Mammary epithelial cell (primary cell): ENCODE measurements at regions of chr15 and their contacts with region 1.

Region 1: DNA sequence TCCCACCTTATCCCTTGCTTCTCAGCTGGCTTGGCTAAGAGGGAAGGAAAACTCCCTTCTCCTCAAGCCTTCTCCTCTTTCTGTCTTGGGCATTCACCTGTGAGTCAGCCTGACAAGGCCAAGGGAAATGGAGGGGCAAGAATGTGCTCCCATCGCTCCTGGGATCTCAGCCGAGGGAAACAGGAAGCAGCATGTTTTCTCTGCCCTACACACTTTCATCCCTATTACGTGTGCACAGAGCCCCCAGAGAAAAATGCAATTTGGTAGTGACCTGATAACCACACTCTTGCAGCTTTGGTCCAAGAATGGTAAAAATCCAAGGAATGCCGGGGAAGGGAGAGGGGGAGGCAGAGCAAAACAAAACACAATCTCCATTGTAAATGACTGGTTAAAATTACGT is 32.9 kb upstream of the MTMR10 start:
- DNase-seq: peak; percentile 91
- H3K4me3 ChIP-seq: peak overlapping the region in 1 of 3 experiments; percentile 4
- H3K27ac ChIP-seq: peak overlapping the region; percentile 93
- H3K4me1 ChIP-seq: peaks cover 30% of the 10 kb centered on the region
- H3K27me3 ChIP-seq: no peaks in the 10 kb centered on the region
- CTCF ChIP-seq: no peak

Region 2: DNA sequence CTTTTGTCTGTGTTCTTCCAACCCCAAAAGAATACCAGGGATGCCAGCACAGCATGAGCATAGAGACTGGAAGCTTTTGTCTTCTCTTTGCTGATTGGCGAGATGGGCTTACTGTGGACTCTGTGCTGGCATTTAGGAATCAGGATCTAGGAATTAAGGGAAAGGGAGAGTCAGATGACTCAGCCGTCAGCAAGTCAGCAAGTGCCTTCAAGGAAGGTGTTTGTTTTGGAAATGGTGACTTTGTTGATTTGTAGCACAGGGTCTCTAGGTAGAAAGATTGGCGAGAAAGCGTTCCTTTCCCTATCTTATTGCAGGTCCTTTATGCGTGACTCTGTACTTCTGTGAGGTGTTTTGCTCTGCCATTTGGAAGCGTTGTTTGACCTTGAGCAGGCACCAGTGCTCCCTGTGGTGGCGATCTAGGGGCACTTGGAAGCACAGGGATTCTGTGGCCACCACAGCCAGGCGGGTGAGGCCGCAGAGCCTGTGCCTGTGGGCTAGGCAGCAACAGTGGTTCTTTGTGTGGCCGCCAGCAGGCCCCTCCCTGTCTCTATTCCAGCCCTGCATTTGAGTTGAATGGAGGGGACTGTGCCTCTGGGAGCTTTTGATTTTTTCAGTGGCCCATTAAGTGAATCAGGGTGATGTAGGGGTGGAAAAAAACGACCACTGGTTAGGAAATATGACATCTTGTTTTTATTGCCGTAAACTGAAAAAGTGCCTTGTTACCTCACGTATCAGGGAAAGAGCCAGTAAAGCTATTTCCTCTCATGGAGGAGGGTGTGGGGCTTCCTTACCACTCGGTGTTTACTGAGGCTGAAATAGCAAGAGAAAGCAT is 101.6 kb before region 1 on chr15:
- CTCF ChIA-PET with region 1: no interaction called
- dilution Hi-C with region 1: loop called (anchors 5 kb)
- in situ Hi-C with region 1: no loop called
- intact Hi-C with region 1: no loop called
- DNase-seq: peak; percentile 69
- H3K4me3 ChIP-seq: no peak overlapping the region
- H3K27ac ChIP-seq: peak overlapping the region; percentile 15
- H3K4me1 ChIP-seq: peaks cover 17% of the 10 kb centered on the region
- H3K27me3 ChIP-seq: no peaks in the 10 kb centered on the region
- CTCF ChIP-seq: no peak

Region 3: DNA sequence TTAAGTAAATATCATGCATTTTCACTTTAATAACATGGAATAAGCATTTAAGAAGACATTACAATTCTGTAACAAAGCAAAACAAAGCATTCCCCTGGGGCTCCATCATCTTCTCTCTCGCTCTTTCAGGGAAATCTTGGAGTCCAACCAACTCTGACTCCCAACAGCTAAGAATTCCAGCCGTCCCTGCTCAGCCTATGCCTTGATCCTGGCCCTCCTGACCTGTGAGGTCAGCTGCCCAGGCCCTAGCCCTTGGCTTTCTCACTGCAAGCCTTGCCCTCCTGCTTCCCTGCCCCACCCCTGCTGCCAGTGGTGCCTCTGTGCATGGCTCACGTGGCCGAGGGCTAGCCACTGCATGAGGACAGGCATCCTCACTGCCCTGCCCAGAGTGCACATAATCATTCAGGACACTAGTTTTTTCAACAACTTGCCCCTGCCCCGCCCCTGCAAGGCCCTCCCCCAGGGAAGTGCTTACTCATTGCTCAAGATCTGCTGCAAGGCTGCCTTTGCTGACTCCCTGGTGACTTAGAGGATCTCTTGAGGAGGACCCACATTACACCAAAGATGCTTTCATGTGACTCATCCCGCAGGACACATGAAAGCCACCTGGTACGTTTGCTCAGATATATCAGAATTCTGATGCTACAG is 70.5 kb before region 1 on chr15:
- CTCF ChIA-PET with region 1: no interaction called
- dilution Hi-C with region 1: loop called (anchors 5 kb)
- in situ Hi-C with region 1: no loop called
- intact Hi-C with region 1: no loop called
- DNase-seq: peak; percentile 87
- H3K4me3 ChIP-seq: no peak overlapping the region
- H3K27ac ChIP-seq: peak overlapping the region; percentile 3
- H3K4me1 ChIP-seq: peaks cover 8% of the 10 kb centered on the region
- H3K27me3 ChIP-seq: no peaks in the 10 kb centered on the region
- CTCF ChIP-seq: no peak

Region 4: DNA sequence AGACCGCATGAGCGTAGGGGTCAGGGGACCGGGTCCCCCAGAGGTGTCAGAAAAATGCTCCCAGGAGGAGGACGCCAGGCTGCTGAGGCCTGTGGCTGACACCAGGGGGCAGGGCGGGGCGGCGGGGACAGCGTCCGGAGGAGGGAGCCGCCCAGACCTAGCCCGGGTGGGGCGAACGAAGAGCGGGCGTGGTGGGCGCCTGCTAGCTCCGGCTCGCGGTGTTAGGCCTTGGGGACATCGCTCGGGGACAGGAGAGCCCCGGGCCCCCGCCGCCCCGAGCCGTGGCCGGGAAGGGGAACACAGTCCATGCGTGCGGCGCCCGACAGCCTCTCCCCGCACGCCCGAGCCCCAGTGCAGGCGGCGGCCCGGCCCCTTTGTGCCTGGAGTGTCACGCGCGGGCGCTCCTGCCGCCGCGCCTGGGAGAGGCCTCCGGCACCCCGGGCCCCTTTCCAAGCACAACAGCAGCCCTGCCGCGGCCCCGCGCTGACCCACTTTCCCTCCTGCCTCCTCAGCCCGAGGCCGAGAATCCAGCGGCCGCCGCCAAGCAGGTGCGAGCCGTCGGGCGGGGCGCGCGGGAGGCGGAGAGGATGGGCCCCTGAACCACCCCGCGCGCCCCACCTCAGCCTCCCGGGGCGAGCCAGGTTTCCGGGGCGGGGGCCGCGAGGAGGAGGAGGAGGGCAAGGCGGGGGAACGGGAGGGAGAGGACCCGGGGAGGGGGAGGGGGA is 191.3 kb after region 1 on chr15:
- CTCF ChIA-PET with region 1: no interaction called
- dilution Hi-C with region 1: loop called (anchors 5 kb)
- in situ Hi-C with region 1: no loop called
- intact Hi-C with region 1: no loop called
- DNase-seq: peak; percentile 49
- H3K4me3 ChIP-seq: peak overlapping the region; percentile 9 to 43 (median 34)
- H3K27ac ChIP-seq: peak overlapping the region; percentile 8
- H3K4me1 ChIP-seq: peaks cover 25% of the 10 kb centered on the region
- H3K27me3 ChIP-seq: no peaks in the 10 kb centered on the region
- CTCF ChIP-seq: peak; percentile 34 to 75

Region 5: DNA sequence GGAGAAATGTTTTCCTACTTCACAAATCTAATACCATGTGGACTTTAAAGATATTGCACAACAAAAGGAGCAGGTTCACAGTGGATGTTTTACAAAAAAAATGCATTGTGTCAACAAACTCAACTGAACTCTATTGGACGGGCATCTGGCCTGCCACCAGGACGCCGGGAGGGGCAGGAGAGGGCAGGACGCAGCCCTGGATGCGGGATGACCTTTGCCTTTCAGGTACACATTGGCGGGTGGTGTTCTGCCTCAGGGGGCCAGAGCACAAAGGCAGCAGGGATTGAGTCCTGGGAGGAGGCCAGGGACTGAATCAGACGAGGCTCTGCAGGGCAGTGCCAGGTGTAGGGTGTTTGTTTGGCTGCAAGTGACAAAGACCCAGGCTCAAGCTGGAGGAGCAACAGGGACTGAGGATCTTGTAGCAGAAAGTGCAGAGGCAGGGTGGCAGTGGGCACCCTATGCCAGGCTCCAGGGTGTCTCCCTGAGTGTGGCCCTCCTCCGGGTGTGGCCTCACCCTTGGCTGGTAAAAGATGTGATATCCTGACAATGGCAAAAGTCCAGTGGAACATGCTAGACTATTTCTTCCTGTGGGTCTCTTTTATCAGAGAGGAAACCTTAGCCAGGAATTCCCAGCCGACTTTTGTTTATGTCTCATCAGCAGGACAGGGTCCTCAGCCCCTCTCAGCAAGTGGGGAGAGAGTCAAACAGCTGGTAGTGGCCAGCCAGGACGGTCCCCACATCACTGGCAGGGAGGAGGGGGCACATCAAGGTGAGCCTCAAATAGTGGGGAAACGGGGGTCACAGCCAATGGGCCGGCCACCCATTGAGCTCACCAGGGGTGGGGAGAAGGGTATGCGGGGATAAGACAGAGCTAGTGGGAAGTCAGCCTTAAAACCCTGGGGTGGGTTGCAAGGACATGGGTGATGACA is 272.6 kb after region 1 on chr15:
- CTCF ChIA-PET with region 1: no interaction called
- dilution Hi-C with region 1: no loop called
- in situ Hi-C with region 1: no loop called
- intact Hi-C with region 1: no loop called
- DNase-seq: peak; percentile 11
- H3K4me3 ChIP-seq: no peak overlapping the region
- H3K27ac ChIP-seq: no peak overlapping the region
- H3K4me1 ChIP-seq: no peaks in the 10 kb centered on the region
- H3K27me3 ChIP-seq: no peaks in the 10 kb centered on the region
- CTCF ChIP-seq: no peak